Endothelial cell of umbilical vein (primary cell): ENCODE measurements at regions of chr14 and their contacts with region 1.

Region 1: DNA sequence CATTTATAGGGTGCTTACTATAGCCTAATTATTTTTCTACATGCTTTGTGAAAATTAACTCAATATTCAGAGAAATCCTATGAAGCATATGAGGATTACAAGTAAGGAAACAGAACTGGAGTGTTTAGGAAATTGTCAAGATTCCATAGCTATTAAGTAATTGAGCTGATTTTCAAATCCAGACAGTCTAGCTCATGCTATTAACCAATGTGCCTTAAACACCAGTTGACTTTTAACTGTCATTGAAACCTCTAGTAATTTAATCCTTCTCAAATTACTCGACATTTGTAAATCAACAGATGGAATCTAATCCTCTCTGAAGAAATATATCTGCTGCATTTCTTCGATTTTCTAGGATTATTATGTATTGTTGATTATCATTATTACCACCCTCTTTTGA is 488.9 kb downstream of the MDGA2 start:
- DNase-seq: peak; percentile 79
- H3K4me3 ChIP-seq: no peak overlapping the region
- H3K27ac ChIP-seq: peak overlapping the region; percentile 69
- H3K4me1 ChIP-seq: peaks cover 14% of the 10 kb centered on the region
- H3K27me3 ChIP-seq: no peaks in the 10 kb centered on the region
- CTCF ChIP-seq: no peak
- POLR2A ChIP-seq: no peak

Region 2: DNA sequence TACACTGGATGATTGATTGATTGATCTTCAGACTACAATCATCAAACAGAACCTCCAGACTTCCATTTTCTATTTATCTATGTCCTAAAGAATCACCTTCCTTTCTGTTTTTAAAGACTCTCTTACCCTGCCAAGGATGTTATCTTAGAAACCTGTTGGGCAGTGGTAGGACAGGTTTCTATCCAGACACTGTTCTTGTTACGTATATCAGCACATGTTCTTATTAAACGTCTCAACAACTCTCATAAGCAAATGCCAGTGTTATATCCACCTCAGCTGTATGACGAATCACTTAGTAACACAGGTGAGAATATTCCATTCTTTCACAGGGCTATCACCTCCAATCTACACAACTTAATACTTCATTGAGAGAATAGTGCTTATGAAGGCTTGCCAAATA is 494.7 kb before region 1 on chr14:
- CTCF ChIA-PET with region 1: no interaction called
- POLR2A ChIA-PET with region 1: no interaction called
- dilution Hi-C with region 1: no loop called
- intact Hi-C with region 1: no loop called
- DNase-seq: no peak
- H3K4me3 ChIP-seq: no peak overlapping the region
- H3K27ac ChIP-seq: no peak overlapping the region
- H3K4me1 ChIP-seq: no peaks in the 10 kb centered on the region
- H3K27me3 ChIP-seq: no peaks in the 10 kb centered on the region
- CTCF ChIP-seq: no peak
- POLR2A ChIP-seq: no peak

Region 3: DNA sequence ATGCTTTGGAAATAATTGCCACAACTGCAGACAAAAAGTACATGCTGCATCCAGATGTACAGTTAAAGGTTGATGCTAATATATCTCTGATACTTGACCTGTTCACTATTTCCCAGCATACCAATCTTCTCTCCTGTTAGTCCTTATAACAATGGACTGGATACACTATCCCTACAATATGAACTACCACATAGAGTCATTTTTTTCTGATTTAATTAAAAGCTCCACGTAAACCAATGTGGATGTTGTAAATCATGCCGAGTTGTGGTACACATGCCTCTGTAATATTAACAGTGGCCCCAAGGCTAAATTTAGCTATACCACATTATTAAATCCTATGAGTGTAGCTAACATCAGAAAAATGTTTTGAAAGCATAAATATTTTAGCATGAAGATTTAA is 65.8 kb before region 1 on chr14:
- CTCF ChIA-PET with region 1: no interaction called
- POLR2A ChIA-PET with region 1: no interaction called
- dilution Hi-C with region 1: no loop called
- intact Hi-C with region 1: no loop called
- DNase-seq: no peak
- H3K4me3 ChIP-seq: no peak overlapping the region
- H3K27ac ChIP-seq: no peak overlapping the region
- H3K4me1 ChIP-seq: no peaks in the 10 kb centered on the region
- H3K27me3 ChIP-seq: no peaks in the 10 kb centered on the region
- CTCF ChIP-seq: no peak
- POLR2A ChIP-seq: no peak

Region 4: DNA sequence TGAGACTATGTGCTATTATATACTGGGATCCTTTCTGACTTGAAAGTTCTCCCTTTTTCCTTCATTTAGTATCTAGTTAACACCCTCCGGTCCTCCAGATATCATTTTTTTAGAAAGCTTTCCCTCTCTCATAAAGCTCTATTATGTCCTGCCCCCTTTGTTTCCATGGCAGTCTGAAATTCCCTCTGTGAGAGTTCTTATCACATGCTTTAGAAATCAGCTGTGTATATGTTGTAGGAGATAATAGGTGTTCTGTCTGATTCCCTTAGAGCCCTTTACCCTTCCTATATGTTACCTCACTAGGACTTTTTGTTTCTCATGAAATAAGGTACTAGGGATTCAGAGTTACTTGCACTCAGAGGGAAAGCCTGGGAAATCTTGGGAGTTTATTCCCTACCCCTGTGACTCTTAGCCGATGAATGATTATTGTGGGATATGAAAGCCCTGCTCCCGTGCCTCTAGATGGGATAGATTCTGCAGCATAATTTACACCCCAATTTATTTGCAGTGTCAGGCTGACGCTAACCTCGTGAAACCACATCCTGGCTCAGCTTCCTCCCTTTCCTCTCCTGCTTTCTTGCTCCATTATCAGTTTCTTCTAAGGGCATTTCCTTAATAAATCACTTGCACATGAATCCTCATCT is 40.5 kb after region 1 on chr14:
- CTCF ChIA-PET with region 1: interaction called, 4 read pairs
- POLR2A ChIA-PET with region 1: no interaction called
- dilution Hi-C with region 1: no loop called
- intact Hi-C with region 1: loop called (anchors 2 kb)
- DNase-seq: peak; percentile 85
- H3K4me3 ChIP-seq: peak overlapping the region in 1 of 3 experiments; percentile 13
- H3K27ac ChIP-seq: peak overlapping the region; percentile 69
- H3K4me1 ChIP-seq: peaks cover 35% of the 10 kb centered on the region
- H3K27me3 ChIP-seq: no peaks in the 10 kb centered on the region
- CTCF ChIP-seq: no peak
- POLR2A ChIP-seq: no peak

Region 5: GRCh38 chr14:47235619-47236018 is 49.1 kb after region 1 on chr14:
- CTCF ChIA-PET with region 1: no interaction called
- POLR2A ChIA-PET with region 1: no interaction called
- dilution Hi-C with region 1: no loop called
- intact Hi-C with region 1: loop called (anchors 2 kb)
- DNase-seq: peak; percentile 59
- H3K4me3 ChIP-seq: no peak overlapping the region
- H3K27ac ChIP-seq: peak overlapping the region; percentile 41
- H3K4me1 ChIP-seq: peaks cover 18% of the 10 kb centered on the region
- H3K27me3 ChIP-seq: no peaks in the 10 kb centered on the region
- CTCF ChIP-seq: no peak
- POLR2A ChIP-seq: no peak